ENCODE measurements at regions of chr6 and their contacts with region 1.

Region 1: DNA sequence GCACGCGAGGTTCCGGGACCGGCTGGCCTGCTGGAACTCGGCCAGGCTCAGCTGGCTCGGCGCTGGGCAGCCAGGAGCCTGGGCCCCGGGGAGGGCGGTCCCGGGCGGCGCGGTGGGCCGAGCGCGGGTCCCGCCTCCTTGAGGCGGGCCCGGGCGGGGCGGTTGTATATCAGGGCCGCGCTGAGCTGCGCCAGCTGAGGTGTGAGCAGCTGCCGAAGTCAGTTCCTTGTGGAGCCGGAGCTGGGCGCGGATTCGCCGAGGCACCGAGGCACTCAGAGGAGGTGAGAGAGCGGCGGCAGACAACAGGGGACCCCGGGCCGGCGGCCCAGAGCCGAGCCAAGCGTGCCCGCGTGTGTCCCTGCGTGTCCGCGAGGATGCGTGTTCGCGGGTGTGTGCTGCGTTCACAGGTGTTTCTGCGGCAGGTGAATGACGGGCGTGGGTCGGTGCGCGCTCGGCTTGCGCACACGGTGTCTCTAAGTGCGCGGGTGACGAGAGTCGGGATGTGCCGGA is at the start of gene CDKN1A:
- DNase-seq: peak; percentile 86 to 94
- ATAC-seq: peak; percentile 38 to 61
- H3K4me3 ChIP-seq: peak within 1 kb of the TSS; percentile 91 to 97 (median 93)
- H3K27ac ChIP-seq: peak within 1 kb of the TSS; percentile 99 to 100 (median 100)
- H3K4me1 ChIP-seq: peaks cover 26 to 37% of the 10 kb centered on the region in 2 donors
- H3K27me3 ChIP-seq: no peaks in the 10 kb centered on the region
- CTCF ChIP-seq: peak in 3 of 5 experiments; percentile 21 to 45 (median 28)
- POLR2A ChIP-seq: peak; percentile 99 to 100
- total RNA-seq, gene CDKN1A: 110 to 346 (median 260) TPM

Region 2: DNA sequence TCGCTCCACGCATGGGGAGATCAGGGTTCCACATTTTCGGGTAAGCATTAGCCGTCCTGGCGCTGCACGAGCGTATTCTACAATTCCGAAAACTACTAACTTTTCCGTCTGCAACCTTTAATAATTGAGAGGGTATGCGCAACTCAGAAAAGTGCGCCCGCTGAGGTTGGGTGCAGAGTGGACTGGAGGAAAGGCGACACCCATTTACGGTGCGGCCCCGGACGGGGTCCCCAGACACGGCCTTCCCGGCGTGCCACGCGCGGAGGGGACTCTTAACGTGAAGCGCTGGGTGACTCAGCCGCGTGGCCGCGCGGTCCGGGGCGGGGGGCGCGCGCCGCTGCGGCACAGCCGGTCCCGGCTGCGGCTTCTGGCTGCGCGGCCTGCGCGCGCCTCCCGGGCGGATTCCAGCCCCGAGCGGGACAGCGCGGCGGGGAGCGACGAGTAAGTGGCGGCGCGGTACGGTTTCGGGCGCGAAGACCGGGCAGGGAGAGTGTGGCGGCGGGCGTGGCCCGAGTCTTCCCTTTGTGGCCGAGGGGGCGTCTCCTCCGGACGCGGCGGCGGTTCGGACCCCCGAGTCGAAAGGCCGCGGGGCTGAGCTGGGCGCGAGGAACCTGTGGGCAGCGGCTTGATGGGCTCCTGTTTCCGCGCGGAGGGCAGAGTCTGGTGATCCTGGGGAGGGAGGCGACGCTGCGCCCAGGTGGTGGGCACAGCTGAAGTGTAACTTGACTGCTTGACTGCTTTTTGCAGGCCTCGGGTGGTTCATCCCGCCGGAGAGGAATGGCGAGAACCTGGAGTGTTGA is 235.7 kb before region 1 on chr6 and contains the starts of genes KCTD20 and PXT1:
- in situ Hi-C with region 1: loop called in 1 of 4 experiments (anchors 25 kb)
- intact Hi-C with region 1: loop called (anchors 2 kb)
- DNase-seq: peak; percentile 73 to 89
- ATAC-seq: peak; percentile 73 to 75
- H3K4me3 ChIP-seq: peak within 1 kb of the TSS; percentile 86 to 96 (median 92)
- H3K27ac ChIP-seq: peak within 1 kb of the TSS; percentile 97 to 99 (median 98)
- H3K4me1 ChIP-seq: peaks cover 35 to 37% of the 10 kb centered on the region in 2 donors
- H3K27me3 ChIP-seq: no peaks in the 10 kb centered on the region
- CTCF ChIP-seq: peak in 2 of 5 experiments; percentile 26 to 40
- POLR2A ChIP-seq: peak; percentile 94
- total RNA-seq, gene KCTD20: 28.7 to 39.7 (median 32.9) TPM
- total RNA-seq, gene PXT1: not detected

Region 3: DNA sequence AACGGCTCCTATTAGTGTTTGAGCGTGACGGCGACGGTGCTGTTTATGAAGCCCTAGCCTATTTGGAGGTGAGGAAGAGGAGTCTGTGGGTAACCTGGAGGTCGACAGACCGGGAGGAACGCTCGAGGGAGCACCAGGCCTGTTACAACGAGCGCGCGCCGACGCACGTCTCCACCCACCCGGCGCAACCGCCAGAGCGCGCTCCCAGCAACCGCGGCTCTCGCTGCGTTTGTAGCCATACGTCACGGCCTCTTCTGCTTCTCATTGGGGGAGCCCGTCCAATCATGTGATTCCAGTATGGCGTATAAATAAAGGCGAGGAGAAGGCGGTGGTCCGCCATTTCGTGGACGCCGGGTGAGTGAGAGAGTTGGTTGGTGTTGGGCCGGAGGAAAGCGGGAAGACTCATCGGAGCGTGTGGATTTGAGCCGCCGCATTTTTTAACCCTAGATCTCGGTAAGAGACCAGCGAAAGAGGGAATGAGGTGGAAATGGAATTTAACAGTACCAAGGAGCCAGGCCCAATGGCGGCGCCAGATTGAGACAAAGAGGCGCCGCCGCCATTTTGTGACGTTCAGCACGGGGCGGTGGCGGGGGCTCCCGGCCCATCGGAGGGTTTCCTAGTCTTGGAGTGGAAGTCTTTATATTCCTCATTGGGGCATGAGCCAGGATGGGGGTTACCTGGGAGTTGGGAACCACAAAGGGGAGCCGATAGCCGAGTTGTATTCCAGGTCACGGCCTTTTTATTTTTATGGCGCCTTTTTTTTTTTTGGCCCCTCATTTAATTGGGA is 84.4 kb before region 1 on chr6 and contains the start of gene SRSF3:
- in situ Hi-C with region 1: no loop called
- intact Hi-C with region 1: loop called (anchors 1 kb)
- DNase-seq: peak; percentile 96 to 97
- ATAC-seq: peak; percentile 93 to 95
- H3K4me3 ChIP-seq: peak within 1 kb of the TSS; percentile 69 to 94 (median 78)
- H3K27ac ChIP-seq: peak within 1 kb of the TSS; percentile 93 to 99 (median 97)
- H3K4me1 ChIP-seq: peaks cover 28 to 36% of the 10 kb centered on the region in 2 donors
- H3K27me3 ChIP-seq: no peaks in the 10 kb centered on the region
- CTCF ChIP-seq: peak; percentile 30 to 70 (median 66)
- POLR2A ChIP-seq: peak; percentile 100
- total RNA-seq, gene SRSF3: 66.3 to 118 (median 83.2) TPM

Region 4: GRCh38 chr6:36623547-36624459 is 54.8 kb before region 1 on chr6:
- in situ Hi-C with region 1: loop called (anchors 5 to 10 kb)
- intact Hi-C with region 1: loop called (anchors 1 kb)
- DNase-seq: peak; percentile 74 to 85
- ATAC-seq: peak; percentile 67 to 82
- H3K4me3 ChIP-seq: no peak overlapping the region
- H3K27ac ChIP-seq: peak overlapping the region in 1 of 4 donors; percentile 38
- H3K4me1 ChIP-seq: peaks cover 27 to 29% of the 10 kb centered on the region in 2 donors
- H3K27me3 ChIP-seq: no peaks in the 10 kb centered on the region
- CTCF ChIP-seq: peak; percentile 74 to 92 (median 88)
- POLR2A ChIP-seq: no peak

Region 5: GRCh38 chr6:36752886-36753506 is 74.4 kb after region 1 on chr6:
- in situ Hi-C with region 1: no loop called
- intact Hi-C with region 1: loop called (anchors 2 kb)
- DNase-seq: peak; percentile 71 to 92
- ATAC-seq: peak; percentile 92 to 93
- H3K4me3 ChIP-seq: no peak overlapping the region
- H3K27ac ChIP-seq: peak overlapping the region; percentile 85 to 93 (median 90)
- H3K4me1 ChIP-seq: peaks cover 21 to 25% of the 10 kb centered on the region in 2 donors
- H3K27me3 ChIP-seq: no peaks in the 10 kb centered on the region
- CTCF ChIP-seq: no peak
- POLR2A ChIP-seq: no peak

Region 6: DNA sequence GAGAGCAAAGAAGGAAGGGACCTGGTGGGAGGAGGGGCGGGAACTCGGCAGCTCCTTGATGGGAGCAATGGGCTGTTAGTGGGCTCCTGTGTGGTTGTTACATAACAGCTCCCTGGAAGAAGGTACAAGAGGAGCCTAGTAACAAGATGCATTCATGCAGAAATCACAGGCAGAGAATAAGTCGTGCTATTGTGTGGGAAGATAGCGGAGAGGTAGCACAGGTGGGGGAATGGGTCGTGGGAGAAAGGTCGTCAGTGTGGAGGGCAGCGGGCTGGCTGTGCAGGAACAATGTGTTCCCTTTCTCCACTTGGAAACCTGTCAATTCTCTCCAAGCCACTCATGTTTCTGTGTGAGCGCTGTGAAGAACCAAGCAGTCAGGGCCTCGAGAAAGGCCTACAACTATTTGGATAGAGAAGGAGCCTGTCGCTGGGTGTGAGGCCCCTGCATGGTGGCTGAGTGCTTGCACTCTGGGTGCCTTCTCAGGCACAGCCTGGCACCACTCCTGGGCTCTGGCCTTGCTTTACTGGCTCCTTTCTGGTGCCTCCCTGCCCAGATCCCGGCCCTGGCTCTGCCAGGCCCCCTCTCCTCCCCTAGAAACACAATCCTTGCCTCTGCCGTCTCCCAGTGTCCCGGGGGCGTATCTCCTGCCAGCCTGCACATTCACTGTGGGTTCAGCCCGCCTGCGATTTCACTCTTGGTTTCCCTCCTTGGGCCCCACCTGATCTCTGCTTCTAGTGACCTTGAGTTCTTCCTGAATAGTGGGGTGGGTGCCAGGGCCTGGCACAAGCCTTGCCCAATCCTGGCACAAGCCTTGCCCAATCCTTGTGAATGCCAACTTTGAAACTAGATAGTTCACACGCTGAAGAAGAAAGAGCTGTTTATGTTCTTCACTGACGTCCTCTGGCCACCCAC is 319.5 kb after region 1 on chr6:
- in situ Hi-C with region 1: no loop called
- intact Hi-C with region 1: loop called (anchors 5 kb)
- DNase-seq: peak; percentile 68 to 90
- ATAC-seq: peak; percentile 82 to 87
- H3K4me3 ChIP-seq: peak overlapping the region in 2 of 4 donors; percentile 30 to 43
- H3K27ac ChIP-seq: peak overlapping the region; percentile 93 to 100 (median 96)
- H3K4me1 ChIP-seq: peaks cover 21 to 25% of the 10 kb centered on the region in 2 donors
- H3K27me3 ChIP-seq: no peaks in the 10 kb centered on the region
- CTCF ChIP-seq: no peak
- POLR2A ChIP-seq: no peak

Region 7: DNA sequence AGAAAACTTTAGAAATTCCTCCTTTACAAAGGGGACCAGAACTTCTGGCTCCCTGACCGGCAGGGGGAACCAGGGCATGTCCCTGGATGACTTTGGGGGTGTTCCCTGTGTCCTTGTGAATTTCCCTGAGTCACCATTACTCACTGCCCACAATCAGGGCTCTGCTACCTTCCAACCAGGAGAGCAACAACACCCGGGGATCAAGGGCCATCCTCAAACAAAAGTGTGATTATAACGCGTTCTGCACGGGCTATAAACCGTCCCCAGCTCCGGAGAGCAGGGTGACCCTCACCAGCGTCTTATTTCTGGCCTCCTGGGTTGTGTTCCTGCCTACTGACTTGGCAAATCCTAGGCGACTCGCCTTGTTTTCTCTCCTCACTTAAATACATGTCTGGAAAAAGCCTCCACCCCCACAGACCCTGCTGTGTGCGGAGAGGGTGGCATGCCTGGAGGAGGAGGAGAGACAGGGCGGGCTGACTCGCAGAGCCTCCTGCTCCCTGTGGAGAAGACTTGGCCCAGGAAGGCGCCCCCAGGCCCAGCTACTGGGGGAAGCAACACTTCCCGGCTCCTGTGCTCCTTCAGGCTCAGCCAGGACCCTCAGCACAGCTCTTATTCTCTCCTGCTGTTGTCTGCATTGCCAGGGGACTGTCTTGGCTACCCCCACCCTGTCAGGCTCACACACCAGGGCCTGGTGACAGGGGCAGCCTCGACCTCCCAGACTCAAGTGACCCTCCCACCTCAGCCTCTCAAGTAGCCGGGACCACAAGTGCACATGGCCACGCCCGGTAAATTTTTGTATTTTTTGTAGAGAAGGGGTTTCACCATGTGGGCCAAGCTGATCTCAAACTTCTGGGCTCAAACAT is 381.0 kb after region 1 on chr6:
- in situ Hi-C with region 1: no loop called
- intact Hi-C with region 1: no loop called
- DNase-seq: peak; percentile 40 to 63
- ATAC-seq: peak; percentile 42 to 48
- H3K4me3 ChIP-seq: no peak overlapping the region
- H3K27ac ChIP-seq: peak overlapping the region; percentile 86 to 89 (median 86)
- H3K4me1 ChIP-seq: peaks cover 31 to 34% of the 10 kb centered on the region in 2 donors
- H3K27me3 ChIP-seq: no peaks in the 10 kb centered on the region
- CTCF ChIP-seq: peak in 4 of 5 experiments; percentile 19 to 60 (median 32)
- POLR2A ChIP-seq: peak in 1 of 2 donors; percentile 41